Activated T-helper 1 cell treated with anti-CD3 and anti-CD28 coated beads, Interleukin-12 subunit alpha, Interleukin-12 subunit beta, Interleukin-2, Interleukin-4 antibody, amounts not matched to agents 30 ng/mL and 10 ng/mL and 1 ng/mL, durations not matched to agents 14 hours and 24 hours and 36 hours (primary cell): ENCODE measurements at regions of chr5 and their contacts with region 1.

Region 1: GRCh38 chr5:53023969-53024368 is 34.8 kb downstream of the ITGA2 start:
- DNase-seq: no peak
- H3K4me3 Mint-ChIP-seq: no peak overlapping the region
- H3K27ac Mint-ChIP-seq: no peak overlapping the region
- H3K4me1 Mint-ChIP-seq: no peaks in the 10 kb centered on the region
- H3K27me3 Mint-ChIP-seq: no peaks in the 10 kb centered on the region

Region 2: DNA sequence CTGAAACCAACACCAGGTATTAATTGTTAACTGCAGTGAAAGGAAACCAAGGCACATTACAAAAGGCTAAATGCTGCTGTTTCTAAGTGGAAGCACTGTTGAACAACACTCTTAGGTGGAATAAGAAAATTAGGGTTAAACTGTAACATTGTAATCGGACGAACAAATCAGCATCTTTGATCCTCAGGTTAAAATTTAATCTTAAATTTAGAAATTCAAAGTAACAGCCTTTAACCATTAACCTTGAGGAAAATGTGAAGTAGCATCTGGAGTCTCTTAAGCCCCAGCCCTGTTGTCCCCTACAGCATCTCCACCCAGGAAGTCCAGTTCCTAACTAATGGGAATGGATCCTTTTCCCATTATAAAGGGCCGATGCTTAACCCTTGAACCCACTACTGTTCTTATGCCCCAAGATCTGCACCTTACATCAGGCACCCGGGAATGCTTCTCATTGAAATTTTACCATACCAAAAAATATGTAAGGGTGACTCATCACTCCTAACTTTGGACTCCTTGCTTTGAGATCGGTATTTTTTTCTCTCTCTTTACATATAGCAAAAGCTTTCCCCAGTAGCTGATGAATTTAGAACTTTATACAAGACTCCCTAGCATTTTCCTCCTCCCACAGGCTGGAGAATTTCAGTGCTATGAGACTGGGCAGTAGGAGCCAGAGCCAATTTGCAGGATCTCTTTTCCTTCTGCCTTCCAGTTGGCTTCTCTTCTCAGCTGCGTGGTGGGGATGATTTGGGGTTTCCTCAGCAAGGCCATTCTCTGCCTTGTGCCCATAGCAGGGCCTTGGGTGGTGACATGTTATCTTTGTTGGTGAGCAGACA is 66.8 kb before region 1 on chr5:
- intact Hi-C with region 1: no loop called
- DNase-seq: no peak
- H3K4me3 Mint-ChIP-seq: no peak overlapping the region
- H3K27ac Mint-ChIP-seq: no peak overlapping the region
- H3K4me1 Mint-ChIP-seq: no peaks in the 10 kb centered on the region
- H3K27me3 Mint-ChIP-seq: peaks cover 9% of the 10 kb centered on the region

Region 3: GRCh38 chr5:53013857-53014256 is 10.1 kb before region 1 on chr5:
- intact Hi-C with region 1: loop called (anchors 1 kb)
- DNase-seq: no peak
- H3K4me3 Mint-ChIP-seq: no peak overlapping the region
- H3K27ac Mint-ChIP-seq: no peak overlapping the region
- H3K4me1 Mint-ChIP-seq: peaks cover 43% of the 10 kb centered on the region
- H3K27me3 Mint-ChIP-seq: peaks cover 13% of the 10 kb centered on the region

Region 4: DNA sequence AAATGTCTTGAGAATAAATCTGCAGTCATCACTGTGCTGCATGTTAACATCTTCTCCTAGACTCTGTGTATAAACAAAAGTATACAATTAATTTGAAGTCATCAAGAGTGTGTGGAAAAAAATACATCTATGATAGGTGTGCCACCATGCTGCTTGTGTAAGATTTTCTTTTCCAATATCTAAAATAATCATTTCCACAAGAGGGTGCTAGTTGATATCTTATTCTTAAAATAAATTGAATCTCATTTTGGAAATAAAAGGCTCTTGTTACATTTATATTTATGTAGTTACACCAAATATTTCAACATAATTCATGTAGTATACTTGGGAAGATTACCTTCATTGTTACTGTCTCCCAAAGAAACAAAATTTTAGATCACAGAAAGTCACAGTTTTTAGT is 99.7 kb after region 1 on chr5:
- intact Hi-C with region 1: no loop called
- DNase-seq: no peak
- H3K4me3 Mint-ChIP-seq: no peak overlapping the region
- H3K27ac Mint-ChIP-seq: no peak overlapping the region
- H3K4me1 Mint-ChIP-seq: no peaks in the 10 kb centered on the region
- H3K27me3 Mint-ChIP-seq: peaks cover 3% of the 10 kb centered on the region

Region 5: DNA sequence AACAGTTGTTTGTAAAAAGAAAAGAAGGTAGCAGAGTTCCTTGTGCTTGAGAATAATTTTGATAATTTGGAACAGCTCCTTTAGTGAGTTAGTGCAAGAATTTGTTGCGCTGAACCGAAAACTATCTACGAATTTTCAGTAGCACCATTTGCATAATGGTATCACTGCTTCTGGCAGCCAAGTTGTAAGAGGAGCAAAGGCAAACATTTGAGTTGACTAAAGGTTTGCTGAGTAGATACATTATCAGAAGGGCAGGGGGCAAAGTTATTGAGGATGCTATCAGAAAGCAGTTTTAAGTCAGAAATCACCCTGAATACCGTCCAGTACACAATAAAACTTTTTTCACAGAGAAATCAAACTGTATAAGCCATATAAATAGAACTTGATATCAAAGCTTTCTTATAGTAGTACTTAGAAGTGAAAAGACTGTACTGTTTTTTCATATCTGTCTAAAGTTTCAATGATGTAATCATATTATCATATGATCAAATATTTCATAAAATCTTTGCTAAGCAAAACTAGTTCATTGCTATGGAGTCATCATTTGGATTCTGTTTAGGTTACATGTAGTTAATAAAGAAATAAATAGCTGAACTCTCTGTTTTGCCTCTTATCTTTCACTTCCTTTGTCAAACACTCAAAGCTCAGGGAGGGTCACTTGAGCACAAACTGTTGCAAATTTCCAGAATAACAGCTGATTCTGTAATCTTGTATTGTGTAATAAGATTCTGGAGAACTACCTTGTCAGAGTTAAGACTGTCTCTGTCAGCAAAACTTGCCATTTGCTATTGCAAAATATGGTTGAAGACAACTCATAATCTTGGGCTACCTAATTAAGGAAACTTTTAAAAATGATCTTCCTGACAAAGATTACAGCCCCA is 267.3 kb after region 1 on chr5:
- intact Hi-C with region 1: no loop called
- DNase-seq: no peak
- H3K4me3 Mint-ChIP-seq: no peak overlapping the region
- H3K27ac Mint-ChIP-seq: no peak overlapping the region
- H3K4me1 Mint-ChIP-seq: no peaks in the 10 kb centered on the region
- H3K27me3 Mint-ChIP-seq: no peaks in the 10 kb centered on the region

Region 6: DNA sequence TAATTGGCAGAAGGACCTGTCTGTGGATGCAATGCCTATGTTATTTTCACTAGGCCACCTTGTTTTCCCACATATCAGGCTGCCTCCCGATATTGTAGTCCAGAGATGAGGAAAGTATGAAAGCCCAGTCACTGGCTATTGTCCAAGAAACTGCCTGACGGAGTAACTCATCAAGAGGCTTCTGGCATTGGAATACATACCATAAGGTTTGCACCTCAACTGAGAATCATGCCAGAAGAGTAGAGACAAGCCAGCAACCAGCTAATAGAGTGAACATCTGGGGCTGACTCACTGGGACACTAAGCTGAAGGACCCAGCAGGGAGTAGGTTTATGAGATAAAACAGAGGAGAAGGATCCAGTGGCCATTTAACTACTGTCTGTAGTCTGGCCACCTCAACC is 319.2 kb after region 1 on chr5:
- intact Hi-C with region 1: no loop called
- DNase-seq: no peak
- H3K4me3 Mint-ChIP-seq: no peak overlapping the region
- H3K27ac Mint-ChIP-seq: no peak overlapping the region
- H3K4me1 Mint-ChIP-seq: no peaks in the 10 kb centered on the region
- H3K27me3 Mint-ChIP-seq: peaks cover 3% of the 10 kb centered on the region